Psoas muscle (tissue), 8 donors: ENCODE measurements at regions of chr7 and their contacts with region 1.

Region 1: DNA sequence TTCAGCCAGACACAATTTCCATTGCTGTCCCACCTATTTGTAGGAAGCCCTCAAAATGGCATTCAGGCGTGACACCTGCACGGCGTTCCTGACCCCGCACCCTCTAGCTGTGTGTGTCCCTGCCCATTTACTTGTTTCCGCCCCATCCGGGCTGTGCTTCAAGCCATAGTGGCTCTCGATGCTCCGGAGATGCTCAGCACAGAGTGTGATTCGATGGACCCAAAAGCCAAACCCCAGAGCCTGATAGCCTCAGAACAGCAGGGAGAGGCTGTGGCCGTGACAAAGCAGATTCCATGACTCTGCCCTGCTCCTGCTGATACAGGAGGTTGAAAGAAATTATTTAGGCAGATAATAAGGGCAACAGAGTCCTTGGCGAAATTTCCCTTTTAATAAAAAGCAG is 13.4 kb downstream of the BUD31 start:
- DNase-seq: no peak
- ATAC-seq: no peak
- H3K4me3 ChIP-seq: no peak overlapping the region
- H3K27ac ChIP-seq: no peak overlapping the region
- H3K4me1 ChIP-seq: no peaks in the 10 kb centered on the region
- H3K27me3 ChIP-seq: no peaks in the 10 kb centered on the region
- CTCF ChIP-seq: no peak

Region 2: DNA sequence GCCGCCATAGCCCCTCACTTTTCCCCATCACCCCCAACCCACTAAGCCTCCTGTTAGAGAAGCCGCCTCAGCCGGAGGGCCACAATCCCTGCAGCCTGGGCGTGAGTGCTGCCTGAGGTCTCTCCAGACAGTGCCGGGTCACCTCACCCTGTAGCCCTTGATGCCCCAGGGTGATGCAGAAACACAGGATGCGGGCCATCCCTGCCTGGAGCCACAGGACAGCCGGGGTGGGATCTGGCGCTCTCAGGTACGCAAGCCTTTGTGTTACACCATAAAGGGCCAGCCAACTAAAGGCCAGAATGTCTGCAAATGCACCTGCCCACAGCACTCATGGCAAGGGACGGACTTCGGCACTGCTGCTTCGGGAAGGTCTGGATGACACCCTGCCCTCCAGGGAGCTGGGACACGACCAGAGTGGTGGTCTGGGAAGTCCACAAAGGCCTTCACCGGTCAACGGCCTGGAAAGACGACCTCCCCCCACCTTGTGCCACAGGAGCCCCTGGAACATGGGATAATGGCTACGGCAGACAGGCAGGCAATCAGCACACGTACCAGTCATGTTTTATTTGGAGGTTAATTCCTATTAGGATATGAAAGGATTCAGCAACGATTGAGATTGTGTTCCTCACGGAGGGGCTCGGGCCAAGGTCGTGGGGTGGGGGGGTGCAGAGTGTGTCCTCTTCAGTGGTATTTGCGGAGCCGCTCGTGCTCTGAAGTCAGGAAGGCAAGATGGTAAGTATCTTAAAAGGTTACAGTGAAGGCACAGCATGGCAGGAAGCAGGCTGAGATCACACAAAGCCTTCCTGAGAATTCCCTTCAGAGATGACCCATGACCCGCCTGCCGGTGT is 35.7 kb after region 1 on chr7:
- intact Hi-C with region 1: loop called in 1 of 2 experiments (anchors 2 kb)
- DNase-seq: peak in 1 of 2 donors; percentile 40
- ATAC-seq: peak in 1 of 4 donors; percentile 4
- H3K4me3 ChIP-seq: no peak overlapping the region
- H3K27ac ChIP-seq: no peak overlapping the region
- H3K4me1 ChIP-seq: peaks cover 13% of the 10 kb centered on the region
- H3K27me3 ChIP-seq: no peaks in the 10 kb centered on the region
- CTCF ChIP-seq: no peak